ENCODE measurements at regions of chr11 and their contacts with region 1.

Region 1: DNA sequence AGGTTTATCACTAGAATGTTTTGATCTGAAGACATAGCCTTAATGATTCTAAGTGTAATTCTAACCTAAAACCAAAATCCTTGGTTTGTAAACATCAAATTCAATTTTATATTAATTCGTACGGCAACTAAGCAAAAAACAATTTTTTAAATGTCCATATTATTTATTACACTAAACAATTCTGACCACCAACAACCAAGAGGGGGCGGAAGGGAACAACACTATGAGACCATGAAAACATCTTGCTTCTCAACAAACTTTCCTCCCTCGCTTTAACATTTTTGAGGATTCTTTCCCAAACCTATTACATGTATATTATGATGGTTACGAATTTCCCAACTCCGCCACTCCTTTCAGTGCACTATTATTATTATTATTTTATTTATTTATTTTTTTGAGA is 6.5 kb upstream of the UCP2 start:
- DNase-seq: peak in 2 of 4 experiments; percentile 47 to 67
- ATAC-seq: peak; percentile 68
- H3K4me3 ChIP-seq: no peak overlapping the region
- H3K27ac ChIP-seq: peak overlapping the region; percentile 10; the same call in 1 of the 3 replicates
- H3K4me1 ChIP-seq: peaks cover 8 to 10% of the 10 kb centered on the region in 2 experiments; a peak in 4 of 5 replicates
- H3K27me3 ChIP-seq: no peaks in the 10 kb centered on the region
- CTCF ChIP-seq: peak; percentile 51 to 82 (median 63); a peak in 5 of 6 replicates
- EP300 ChIP-seq: no peak
- POLR2A ChIP-seq: no peak
- RAD21 ChIP-seq: peak; percentile 74 to 85

Region 2: GRCh38 chr11:73916435-73916834 is 72.7 kb before region 1 on chr11:
- CTCF ChIA-PET with region 1: no interaction called
- POLR2A ChIA-PET with region 1: no interaction called
- in situ Hi-C with region 1: no loop called
- intact Hi-C with region 1: no loop called
- DNase-seq: peak in 1 of 4 experiments; percentile 20
- ATAC-seq: no peak
- H3K4me3 ChIP-seq: no peak overlapping the region
- H3K27ac ChIP-seq: no peak overlapping the region
- H3K4me1 ChIP-seq: peaks cover 0 to 3% of the 10 kb centered on the region in 2 experiments; a peak in 3 of 5 replicates
- H3K27me3 ChIP-seq: no peaks in the 10 kb centered on the region
- CTCF ChIP-seq: no peak
- EP300 ChIP-seq: no peak
- POLR2A ChIP-seq: no peak
- RAD21 ChIP-seq: no peak

Region 3: DNA sequence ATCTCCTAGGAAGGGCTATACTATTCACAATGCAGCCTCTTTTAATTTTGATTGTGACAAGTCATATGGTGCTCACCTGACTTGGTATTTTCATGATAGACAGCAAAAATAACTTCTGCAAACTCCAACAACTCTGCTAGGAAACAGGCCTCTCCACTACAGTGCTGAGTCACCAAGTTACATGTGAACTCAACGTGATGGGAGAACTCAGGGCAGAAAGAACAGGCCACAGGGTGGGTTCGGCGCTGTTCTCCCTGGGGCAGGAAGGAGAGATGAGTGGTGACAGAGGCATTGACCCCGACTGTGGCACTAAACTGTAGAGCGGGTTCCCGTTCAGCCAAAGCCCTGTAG is 96.4 kb after region 1 on chr11:
- CTCF ChIA-PET with region 1: interaction called, 13 read pairs
- POLR2A ChIA-PET with region 1: no interaction called
- in situ Hi-C with region 1: loop called (anchors 5 kb)
- intact Hi-C with region 1: loop called (anchors 1 kb)
- DNase-seq: peak; percentile 45 to 79 (median 54)
- ATAC-seq: peak; percentile 87
- H3K4me3 ChIP-seq: no peak overlapping the region
- H3K27ac ChIP-seq: peak overlapping the region; percentile 48
- H3K4me1 ChIP-seq: peaks cover 7 to 28% of the 10 kb centered on the region in 2 experiments
- H3K27me3 ChIP-seq: no peaks in the 10 kb centered on the region
- CTCF ChIP-seq: 0 out of 6 replicates have a peak, but pooled peaks of 1 of the 3 experiments have one; percentile 4
- EP300 ChIP-seq: peak; percentile 41; the same call in 1 of the 2 replicates
- POLR2A ChIP-seq: no peak
- RAD21 ChIP-seq: peak in 1 of 2 experiments; percentile 20; a peak in 1 of 4 replicates

Region 4: DNA sequence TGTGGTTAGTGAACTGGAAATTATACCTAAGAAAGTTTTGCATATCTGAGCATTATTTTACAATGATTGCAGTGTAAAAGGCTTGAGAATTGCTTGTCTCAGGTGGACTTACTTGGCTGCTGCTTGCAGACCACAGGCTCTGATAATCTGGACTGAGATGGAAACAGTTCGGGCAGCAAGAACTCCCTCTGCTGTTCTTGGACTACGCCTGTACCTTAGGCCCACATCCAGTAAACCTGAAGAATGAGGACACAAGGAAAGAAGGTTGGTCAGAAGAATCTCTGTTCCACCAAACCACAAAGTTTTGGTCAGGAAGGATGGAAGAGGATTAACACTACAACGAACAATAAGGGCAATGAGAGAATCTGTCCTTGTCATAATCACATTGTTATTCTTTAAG is 101.5 kb after region 1 on chr11:
- CTCF ChIA-PET with region 1: interaction called, 13 read pairs
- POLR2A ChIA-PET with region 1: no interaction called
- in situ Hi-C with region 1: loop called (anchors 5 kb)
- intact Hi-C with region 1: loop called (anchors 1 kb)
- DNase-seq: peak in 2 of 4 experiments; percentile 25 to 70
- ATAC-seq: peak; percentile 66
- H3K4me3 ChIP-seq: no peak overlapping the region
- H3K27ac ChIP-seq: no peak overlapping the region
- H3K4me1 ChIP-seq: peaks cover 6 to 22% of the 10 kb centered on the region in 2 experiments
- H3K27me3 ChIP-seq: no peaks in the 10 kb centered on the region
- CTCF ChIP-seq: peak; percentile 43 to 67 (median 49); a peak in 5 of 6 replicates
- EP300 ChIP-seq: no peak
- POLR2A ChIP-seq: no peak
- RAD21 ChIP-seq: peak; percentile 74 to 88

Region 5: GRCh38 chr11:74135127-74135840 is 146.1 kb after region 1 on chr11:
- CTCF ChIA-PET with region 1: no interaction called
- POLR2A ChIA-PET with region 1: no interaction called
- in situ Hi-C with region 1: no loop called
- intact Hi-C with region 1: no loop called
- DNase-seq: peak in 1 of 4 experiments; percentile 10
- ATAC-seq: no peak
- H3K4me3 ChIP-seq: no peak overlapping the region
- H3K27ac ChIP-seq: no peak overlapping the region
- H3K4me1 ChIP-seq: peaks cover 0 to 21% of the 10 kb centered on the region in 2 experiments; a peak in 2 of 5 replicates
- H3K27me3 ChIP-seq: no peaks in the 10 kb centered on the region
- CTCF ChIP-seq: no peak
- EP300 ChIP-seq: no peak
- POLR2A ChIP-seq: no peak
- RAD21 ChIP-seq: no peak

Measured in K562 (cell line).